ENCODE measurements at regions of chr2 and their contacts with region 1.

Region 1: DNA sequence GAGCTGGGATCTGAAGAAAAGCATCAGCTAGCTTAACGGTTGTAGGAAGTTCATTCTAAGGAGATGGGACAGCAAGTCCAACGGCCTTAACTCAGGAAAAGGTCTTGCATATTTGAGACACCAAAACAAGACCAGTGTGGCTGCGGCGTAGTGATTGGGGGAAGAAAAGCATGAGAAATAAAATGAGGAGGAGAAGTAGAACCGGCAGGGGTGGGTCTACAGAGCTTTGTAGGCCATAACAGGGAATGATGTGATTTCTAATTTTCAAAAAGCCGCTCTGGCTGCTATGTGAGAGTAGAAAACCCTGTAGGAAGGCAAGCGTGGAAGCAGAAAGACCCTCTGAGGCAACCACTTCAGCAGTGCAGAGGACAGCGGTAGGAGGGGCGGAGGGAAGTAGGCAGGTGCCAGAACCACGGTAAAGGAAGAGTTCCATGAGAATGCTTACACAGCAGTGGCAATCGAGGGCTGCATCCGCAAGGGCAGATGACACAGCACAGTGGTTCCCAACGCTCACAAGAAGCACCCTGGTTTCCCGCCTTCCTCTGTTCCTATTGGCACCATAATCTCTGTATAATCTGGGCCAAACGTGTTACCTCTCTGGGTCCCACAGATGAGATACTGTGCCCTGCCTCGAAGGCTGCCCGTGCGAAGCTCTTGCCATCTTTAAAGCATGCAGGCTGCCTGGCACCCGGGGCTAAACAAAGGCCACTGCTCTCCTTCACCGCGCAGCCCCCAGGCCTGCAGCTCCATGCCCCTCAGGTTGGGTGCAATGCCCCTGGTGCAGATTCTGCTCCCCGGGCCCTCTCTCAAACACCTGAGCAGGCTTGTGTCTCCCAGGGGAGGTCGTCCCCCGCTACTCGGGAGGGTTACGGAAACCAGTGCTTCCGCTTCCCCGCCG is 791 bp downstream of the ANKRD39 start:
- DNase-seq: peak; percentile 64
- ATAC-seq: peak; percentile 20
- H3K4me3 Mint-ChIP-seq: peak overlapping the region; percentile 89
- H3K27ac Mint-ChIP-seq: peak overlapping the region; percentile 88
- H3K4me1 Mint-ChIP-seq: peaks cover 36% of the 10 kb centered on the region
- H3K27me3 Mint-ChIP-seq: no peaks in the 10 kb centered on the region

Region 2: DNA sequence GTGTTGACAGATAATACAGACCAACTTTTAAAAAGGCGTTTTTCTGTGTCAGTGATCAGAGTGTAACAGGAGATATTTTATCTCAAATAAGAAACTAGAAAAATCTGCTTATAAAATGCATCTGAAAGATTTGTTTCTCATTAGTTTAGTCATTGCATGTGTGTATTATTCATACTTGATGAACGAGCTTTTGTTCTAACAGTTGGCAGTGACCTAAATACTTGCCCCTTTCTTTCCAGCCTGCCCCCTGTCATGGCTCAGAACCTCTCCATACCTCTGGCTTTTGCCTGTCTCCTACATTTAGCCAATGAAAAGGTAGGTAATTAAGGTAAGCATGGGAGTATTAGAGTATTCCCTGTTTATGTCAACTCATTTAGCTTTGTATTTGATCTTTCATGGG is 487.8 kb before region 1 on chr2:
- CTCF ChIA-PET with region 1: no interaction called
- DNase-seq: no peak
- ATAC-seq: no peak
- H3K4me3 Mint-ChIP-seq: no peak overlapping the region
- H3K27ac Mint-ChIP-seq: peak overlapping the region; percentile 16
- H3K4me1 Mint-ChIP-seq: no peaks in the 10 kb centered on the region
- H3K27me3 Mint-ChIP-seq: no peaks in the 10 kb centered on the region

Region 3: GRCh38 chr2:96760036-96760985 is 96.7 kb before region 1 on chr2 and contains the start of gene CNNM4:
- CTCF ChIA-PET with region 1: interaction called, 14 read pairs
- DNase-seq: peak; percentile 94
- ATAC-seq: peak; percentile 97
- H3K4me3 Mint-ChIP-seq: peak within 1 kb of the TSS; percentile 77
- H3K27ac Mint-ChIP-seq: peak within 1 kb of the TSS; percentile 83
- H3K4me1 Mint-ChIP-seq: peaks cover 48% of the 10 kb centered on the region
- H3K27me3 Mint-ChIP-seq: no peaks in the 10 kb centered on the region
- total RNA-seq, gene CNNM4: 7.6 to 7.9 TPM

Region 4: DNA sequence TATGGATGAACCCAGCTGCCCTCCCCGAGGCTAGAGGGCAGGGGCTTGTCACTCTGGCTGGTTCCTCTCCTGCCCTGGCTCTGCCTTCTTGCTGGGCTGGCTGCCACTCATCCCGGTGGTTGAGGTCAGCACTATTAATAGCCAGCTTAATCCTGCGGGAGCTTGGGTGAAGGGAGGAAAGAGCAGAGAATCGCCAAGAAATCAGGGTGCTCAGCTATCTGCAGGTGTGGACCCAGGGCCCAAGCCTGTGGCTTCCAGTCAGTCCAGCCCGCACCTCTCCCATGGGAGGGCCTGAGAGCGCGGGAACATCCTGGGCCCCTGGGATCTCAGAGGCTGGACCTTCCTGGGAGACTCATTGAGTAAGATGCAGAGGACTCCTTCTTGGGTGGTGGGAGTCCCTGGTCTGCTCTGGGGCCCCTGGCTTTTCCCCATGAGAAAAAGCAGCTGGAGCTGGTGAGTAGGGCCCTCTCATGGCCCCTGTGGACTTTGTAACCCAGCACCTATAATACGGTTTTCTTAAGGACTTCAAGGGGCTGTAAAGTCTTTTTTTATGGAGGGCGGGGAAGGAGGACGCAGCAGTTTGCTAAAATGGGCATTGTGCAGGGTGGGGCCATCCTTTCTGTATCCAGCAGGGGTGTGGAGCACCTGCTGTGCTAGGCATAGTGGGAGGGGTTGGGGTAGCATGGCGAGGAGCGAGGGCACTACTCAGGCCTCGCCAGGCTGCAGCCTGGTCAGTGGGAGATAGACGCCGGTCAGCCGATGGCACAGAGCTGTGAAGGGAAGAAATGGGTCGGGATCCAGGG is 68.4 kb before region 1 on chr2:
- CTCF ChIA-PET with region 1: no interaction called
- DNase-seq: no peak
- ATAC-seq: no peak
- H3K4me3 Mint-ChIP-seq: no peak overlapping the region
- H3K27ac Mint-ChIP-seq: no peak overlapping the region
- H3K4me1 Mint-ChIP-seq: no peaks in the 10 kb centered on the region
- H3K27me3 Mint-ChIP-seq: no peaks in the 10 kb centered on the region

Region 5: DNA sequence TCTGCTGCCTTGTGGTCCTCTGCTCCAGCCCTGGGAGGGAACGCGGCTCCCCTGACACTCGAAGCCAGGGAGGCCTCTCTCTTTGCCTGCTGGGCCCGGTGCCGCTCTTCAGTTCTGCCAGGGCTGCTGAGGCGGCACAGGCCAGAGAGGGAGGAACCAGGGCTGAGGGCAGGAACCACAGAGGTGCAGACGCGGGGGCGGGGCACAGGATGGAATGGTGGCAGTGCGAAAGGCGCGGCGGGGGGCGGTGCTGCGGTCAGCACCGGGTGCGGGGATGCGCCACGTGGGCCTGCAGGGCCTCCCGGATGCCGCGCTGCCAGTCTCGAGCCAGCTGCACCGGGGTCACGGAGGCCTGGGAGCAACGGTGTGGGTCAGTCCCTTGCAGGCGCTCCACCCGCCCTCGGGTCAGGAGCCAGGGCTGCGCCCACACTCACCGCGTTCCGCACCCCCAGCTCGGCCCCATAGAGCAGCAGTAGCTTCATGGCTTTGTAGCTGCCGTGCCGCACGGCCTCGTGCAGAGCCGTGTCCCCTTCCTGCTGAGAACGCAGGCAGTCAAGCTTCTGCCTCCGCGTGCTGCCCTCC is 17.6 kb before region 1 on chr2:
- CTCF ChIA-PET with region 1: interaction called, 15 read pairs
- DNase-seq: peak; percentile 88
- ATAC-seq: peak; percentile 91
- H3K4me3 Mint-ChIP-seq: no peak overlapping the region
- H3K27ac Mint-ChIP-seq: peak overlapping the region; percentile 81
- H3K4me1 Mint-ChIP-seq: peaks cover 22% of the 10 kb centered on the region
- H3K27me3 Mint-ChIP-seq: no peaks in the 10 kb centered on the region

Region 6: DNA sequence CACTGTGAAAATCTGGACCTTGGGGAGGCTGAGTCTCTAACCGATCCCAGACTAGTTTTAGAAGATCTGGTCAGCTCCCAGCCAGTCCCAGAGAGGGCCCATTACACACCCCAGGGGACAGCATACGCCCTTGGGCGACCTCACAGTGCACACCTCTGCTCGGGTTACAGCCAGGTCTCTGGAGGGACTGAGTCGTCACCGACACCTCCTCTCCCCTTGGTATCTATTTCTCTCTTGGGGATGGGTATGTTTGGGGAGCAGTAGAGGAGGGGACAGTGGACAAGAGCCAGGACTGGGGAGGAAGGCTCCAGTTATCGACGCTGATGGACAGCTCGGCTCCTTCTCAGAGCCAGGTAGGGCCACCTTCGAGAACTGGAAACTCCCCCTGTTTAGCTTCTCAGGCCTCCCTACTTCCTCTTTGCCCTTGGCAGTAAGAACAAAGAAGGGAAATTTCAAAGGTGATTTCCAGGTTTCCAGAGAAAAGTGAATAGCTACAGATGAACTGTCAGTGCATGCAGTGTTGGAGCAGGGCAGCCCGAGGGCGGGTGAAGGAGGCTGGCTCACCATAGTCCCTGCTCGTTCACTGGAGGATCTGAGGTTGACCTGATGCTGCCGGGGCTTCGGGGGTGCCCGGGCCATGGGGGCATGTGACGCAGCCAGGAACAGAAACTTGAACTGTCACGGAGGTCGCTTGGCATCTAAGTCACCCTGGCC is 17.2 kb after region 1 on chr2:
- CTCF ChIA-PET with region 1: interaction called, 40 read pairs
- DNase-seq: no peak
- ATAC-seq: no peak
- H3K4me3 Mint-ChIP-seq: no peak overlapping the region
- H3K27ac Mint-ChIP-seq: no peak overlapping the region
- H3K4me1 Mint-ChIP-seq: peaks cover 20% of the 10 kb centered on the region
- H3K27me3 Mint-ChIP-seq: peaks cover 16% of the 10 kb centered on the region

Region 7: GRCh38 chr2:96945012-96945804 is 88.2 kb after region 1 on chr2:
- CTCF ChIA-PET with region 1: interaction called, 178 read pairs
- DNase-seq: no peak
- ATAC-seq: no peak
- H3K4me3 Mint-ChIP-seq: no peak overlapping the region
- H3K27ac Mint-ChIP-seq: no peak overlapping the region
- H3K4me1 Mint-ChIP-seq: peaks cover 14% of the 10 kb centered on the region
- H3K27me3 Mint-ChIP-seq: peaks cover 21% of the 10 kb centered on the region

Region 8: DNA sequence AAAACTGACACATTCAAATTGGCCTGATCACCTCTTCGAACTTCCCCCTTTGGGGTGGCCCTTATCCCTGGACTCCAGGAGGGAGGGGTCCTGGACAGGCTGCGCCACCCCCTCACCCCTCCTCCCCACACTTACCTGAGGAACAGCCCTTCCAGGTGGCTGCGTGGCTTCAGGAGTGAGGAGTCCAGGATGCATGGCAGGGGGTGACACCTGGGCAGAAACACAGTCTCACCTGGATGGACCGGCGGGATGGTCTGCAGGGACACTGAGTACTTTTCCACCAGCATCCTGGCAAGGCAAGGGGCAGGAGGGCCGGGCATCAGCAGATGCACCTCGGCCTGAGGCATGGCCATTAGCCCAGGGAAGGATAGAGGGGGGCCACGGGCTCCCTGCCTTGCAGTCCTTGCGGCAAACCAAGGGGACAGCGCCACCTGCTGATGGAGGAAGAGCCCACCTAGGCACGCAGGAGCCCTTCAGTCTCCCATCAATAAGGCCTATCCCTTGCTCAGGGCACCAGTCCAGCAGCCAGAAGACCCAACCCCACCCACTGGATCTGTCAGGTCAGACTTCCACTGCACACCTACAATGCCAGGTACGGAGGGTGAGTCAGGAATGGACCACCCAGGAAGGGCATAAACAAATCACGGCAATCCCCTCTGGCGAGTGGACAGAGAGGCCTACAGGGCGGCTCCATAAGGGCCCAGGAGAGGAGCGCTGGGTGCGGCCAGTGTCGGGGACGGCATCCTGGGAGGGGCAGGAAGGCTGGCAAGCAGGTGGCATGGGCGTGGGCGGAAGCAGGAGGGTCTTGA is 103.3 kb after region 1 on chr2:
- CTCF ChIA-PET with region 1: interaction called, 178 read pairs
- DNase-seq: peak; percentile 93
- ATAC-seq: peak; percentile 84
- H3K4me3 Mint-ChIP-seq: peak overlapping the region; percentile 29
- H3K27ac Mint-ChIP-seq: peak overlapping the region; percentile 95
- H3K4me1 Mint-ChIP-seq: peaks cover 50% of the 10 kb centered on the region
- H3K27me3 Mint-ChIP-seq: no peaks in the 10 kb centered on the region

Measured in activated CD8-positive, alpha-beta memory T cell treated with anti-CD3 and anti-CD28 coated beads, Interleukin-2, amount 10 ng/mL, durations not matched to agents 7 days and 5 days (primary cell).